ENCODE measurements at regions of chr22 and their contacts with region 1.

Region 1: DNA sequence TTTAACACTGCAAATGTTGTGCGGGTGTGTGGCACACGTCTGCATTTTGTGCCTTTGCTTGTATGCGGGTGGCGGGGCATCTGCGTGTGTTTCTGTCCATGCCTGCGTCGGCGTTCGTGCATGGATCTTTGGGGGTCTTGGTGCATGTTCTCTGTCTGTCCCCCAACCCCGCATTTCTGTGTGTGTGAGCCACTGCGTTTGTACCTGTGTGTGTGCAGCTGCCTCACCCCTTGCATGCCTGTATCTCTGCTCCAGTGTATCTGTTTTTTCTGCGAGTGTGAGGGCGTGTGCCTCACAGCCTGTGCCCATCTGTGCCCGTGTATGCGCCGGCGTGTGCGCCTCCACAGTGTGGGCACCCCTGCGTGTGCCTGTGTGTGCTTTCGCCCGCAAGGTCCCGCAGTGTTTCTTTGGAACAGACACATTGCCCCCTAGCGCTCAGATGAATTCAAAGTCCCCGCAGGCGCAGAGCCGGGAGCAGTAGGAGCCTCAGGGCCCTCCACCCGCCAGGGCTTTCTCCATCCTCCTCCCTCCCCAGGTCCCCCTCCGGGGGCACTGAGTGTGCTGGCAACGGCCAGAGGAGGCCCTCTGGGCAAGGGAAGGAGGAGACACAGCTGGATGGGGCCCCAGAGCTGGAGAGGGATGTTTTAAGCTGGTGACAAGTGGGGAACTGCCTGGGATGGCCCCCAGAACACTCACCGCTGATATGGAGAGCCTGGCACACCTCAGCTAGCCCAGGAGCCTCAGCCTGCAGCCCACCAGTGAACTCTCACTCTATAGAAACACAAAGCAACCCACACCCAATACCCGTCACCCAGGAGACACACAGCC is 3.1 kb upstream of the MN1 start:
- DNase-seq: peak; percentile 67
- H3K4me3 ChIP-seq: no peak overlapping the region
- H3K27ac ChIP-seq: no peak overlapping the region
- H3K4me1 ChIP-seq: peaks cover 18% of the 10 kb centered on the region
- H3K27me3 ChIP-seq: peaks cover 8 to 9% of the 10 kb centered on the region in 2 experiments
- CTCF ChIP-seq: peak; percentile 64 to 78
- POLR2A ChIP-seq: no peak

Region 2: GRCh38 chr22:26756675-26757293 is 1047.9 kb before region 1 on chr22:
- CTCF ChIA-PET with region 1: interaction called, 5 read pairs
- POLR2A ChIA-PET with region 1: no interaction called
- dilution Hi-C with region 1: no loop called
- intact Hi-C with region 1: loop called (anchors 1 kb)
- DNase-seq: peak; percentile 46
- H3K4me3 ChIP-seq: peak overlapping the region in 2 of 3 experiments; percentile 13 to 29
- H3K27ac ChIP-seq: no peak overlapping the region
- H3K4me1 ChIP-seq: peaks cover 5% of the 10 kb centered on the region
- H3K27me3 ChIP-seq: no peaks in the 10 kb centered on the region
- CTCF ChIP-seq: peak; percentile 75 to 88
- POLR2A ChIP-seq: no peak

Region 3: DNA sequence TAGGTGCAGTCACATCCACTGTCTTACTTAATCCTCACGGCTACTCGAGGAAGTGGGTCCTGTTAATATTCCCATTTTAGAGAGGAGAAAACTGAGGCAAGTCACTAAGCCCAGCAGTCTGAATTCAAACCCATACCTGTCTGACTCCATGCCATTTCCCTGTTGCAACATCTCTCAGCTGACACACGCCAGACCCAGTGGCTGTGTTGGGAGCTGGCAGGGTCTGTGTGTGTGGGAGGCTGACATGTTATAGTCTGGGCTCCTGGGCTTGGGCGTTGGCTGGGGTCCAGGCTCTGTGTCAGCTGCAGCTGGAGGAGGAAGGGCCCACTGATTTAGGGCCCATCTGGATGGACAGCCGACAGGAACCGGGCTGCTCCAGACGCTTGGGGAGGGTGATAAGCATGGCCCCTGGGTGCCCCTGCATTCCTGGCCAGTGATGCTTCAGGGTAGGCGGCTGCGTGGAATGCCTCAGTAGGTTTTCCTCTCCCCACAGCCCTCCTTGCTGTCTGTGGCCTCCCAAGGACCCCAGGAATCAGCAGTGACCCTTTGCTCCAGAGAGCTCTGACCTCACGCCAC is 565.7 kb before region 1 on chr22:
- CTCF ChIA-PET with region 1: no interaction called
- POLR2A ChIA-PET with region 1: no interaction called
- dilution Hi-C with region 1: no loop called
- intact Hi-C with region 1: loop called (anchors 5 kb)
- DNase-seq: peak; percentile 99
- H3K4me3 ChIP-seq: no peak overlapping the region
- H3K27ac ChIP-seq: peak overlapping the region; percentile 96
- H3K4me1 ChIP-seq: peaks cover 44% of the 10 kb centered on the region
- H3K27me3 ChIP-seq: no peaks in the 10 kb centered on the region
- CTCF ChIP-seq: no peak
- POLR2A ChIP-seq: peak; percentile 92

Region 4: GRCh38 chr22:27420817-27421361 is 383.8 kb before region 1 on chr22:
- CTCF ChIA-PET with region 1: interaction called, 3 read pairs
- POLR2A ChIA-PET with region 1: interaction called, 3 read pairs
- dilution Hi-C with region 1: no loop called
- intact Hi-C with region 1: loop called (anchors 5 kb)
- DNase-seq: peak; percentile 98
- H3K4me3 ChIP-seq: no peak overlapping the region
- H3K27ac ChIP-seq: peak overlapping the region; percentile 97
- H3K4me1 ChIP-seq: peaks cover 43% of the 10 kb centered on the region
- H3K27me3 ChIP-seq: peaks cover 0 to 2% of the 10 kb centered on the region in 2 experiments
- CTCF ChIP-seq: no peak
- POLR2A ChIP-seq: peak; percentile 38

Region 5: GRCh38 chr22:27603800-27604144 is 200.9 kb before region 1 on chr22:
- CTCF ChIA-PET with region 1: no interaction called
- POLR2A ChIA-PET with region 1: no interaction called
- dilution Hi-C with region 1: no loop called
- intact Hi-C with region 1: loop called (anchors 10 kb)
- DNase-seq: peak; percentile 69
- H3K4me3 ChIP-seq: no peak overlapping the region
- H3K27ac ChIP-seq: no peak overlapping the region
- H3K4me1 ChIP-seq: no peaks in the 10 kb centered on the region
- H3K27me3 ChIP-seq: peaks cover 2 to 3% of the 10 kb centered on the region in 2 experiments
- CTCF ChIP-seq: peak in 1 of 2 donors; percentile 12
- POLR2A ChIP-seq: no peak

Region 6: GRCh38 chr22:27850000-27850465 is 45.3 kb after region 1 on chr22:
- CTCF ChIA-PET with region 1: no interaction called
- POLR2A ChIA-PET with region 1: no interaction called
- dilution Hi-C with region 1: no loop called
- intact Hi-C with region 1: no loop called
- DNase-seq: peak; percentile 78
- H3K4me3 ChIP-seq: no peak overlapping the region
- H3K27ac ChIP-seq: peak overlapping the region; percentile 54
- H3K4me1 ChIP-seq: peaks cover 14% of the 10 kb centered on the region
- H3K27me3 ChIP-seq: no peaks in the 10 kb centered on the region
- CTCF ChIP-seq: no peak
- POLR2A ChIP-seq: no peak

Region 7: DNA sequence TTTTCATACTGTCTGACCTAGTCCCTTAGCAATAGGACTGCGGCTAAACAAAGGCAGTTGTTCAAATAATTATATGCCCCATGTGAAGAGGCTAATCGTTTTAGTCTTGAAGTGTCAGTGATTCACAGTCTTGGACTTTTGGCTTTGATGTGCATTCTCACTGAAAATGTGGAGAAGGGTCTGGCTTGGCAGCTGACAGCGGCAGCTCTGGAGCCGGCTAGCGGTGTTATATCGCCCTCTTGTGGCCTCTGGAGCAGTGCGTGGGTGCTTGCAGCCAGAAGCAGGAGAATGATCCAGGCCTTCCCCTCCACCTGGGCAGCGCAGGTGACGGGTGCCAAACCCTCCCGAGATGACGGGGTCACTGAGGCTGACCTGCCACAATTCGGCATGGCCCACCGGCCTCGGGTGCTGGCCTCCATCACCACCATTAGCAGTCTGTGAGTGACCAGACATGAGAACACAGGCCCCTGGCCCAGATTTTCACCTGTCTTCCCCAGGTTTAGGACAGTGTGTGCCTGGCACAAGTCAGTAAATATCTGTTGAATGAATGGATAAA is 204.7 kb after region 1 on chr22:
- CTCF ChIA-PET with region 1: no interaction called
- POLR2A ChIA-PET with region 1: no interaction called
- dilution Hi-C with region 1: no loop called
- intact Hi-C with region 1: loop called (anchors 5 kb)
- DNase-seq: peak; percentile 75
- H3K4me3 ChIP-seq: no peak overlapping the region
- H3K27ac ChIP-seq: no peak overlapping the region
- H3K4me1 ChIP-seq: no peaks in the 10 kb centered on the region
- H3K27me3 ChIP-seq: no peaks in the 10 kb centered on the region
- CTCF ChIP-seq: peak; percentile 95 to 99
- POLR2A ChIP-seq: no peak

Measured in endothelial cell of umbilical vein (primary cell).